ENCODE measurements at regions of chr4 and their contacts with region 1.

Region 1: DNA sequence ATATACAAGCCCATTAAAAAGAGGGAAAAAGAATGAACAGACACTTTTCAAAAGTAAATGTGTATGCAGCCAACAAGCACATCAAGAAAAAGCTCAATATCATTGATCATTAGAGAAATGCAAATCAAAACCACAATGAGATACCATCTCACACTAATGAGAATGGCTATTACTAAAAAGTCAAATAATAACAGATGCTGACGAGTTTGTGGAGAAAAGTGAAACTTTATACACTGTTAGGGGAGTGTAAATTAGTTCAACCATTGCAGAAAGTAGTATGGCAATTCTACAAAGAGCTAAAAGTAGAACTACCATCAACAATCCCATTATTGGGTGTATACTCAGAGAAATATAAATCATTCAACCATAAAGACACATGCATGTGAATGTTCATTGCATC is 203.0 kb downstream of the ARAP2 start:
- DNase-seq: no peak
- ATAC-seq: no peak
- H3K4me3 ChIP-seq: no peak overlapping the region
- H3K27ac ChIP-seq: no peak overlapping the region
- H3K4me1 ChIP-seq: no peaks in the 10 kb centered on the region
- H3K27me3 ChIP-seq: no peaks in the 10 kb centered on the region
- CTCF ChIP-seq: no peak

Region 2: GRCh38 chr4:35824231-35824630 is 217.1 kb before region 1 on chr4:
- CTCF ChIA-PET with region 1: no interaction called
- POLR2A ChIA-PET with region 1: no interaction called
- intact Hi-C with region 1: no loop called
- DNase-seq: no peak
- ATAC-seq: no peak
- H3K4me3 ChIP-seq: no peak overlapping the region
- H3K27ac ChIP-seq: no peak overlapping the region
- H3K4me1 ChIP-seq: no peaks in the 10 kb centered on the region
- H3K27me3 ChIP-seq: no peaks in the 10 kb centered on the region
- CTCF ChIP-seq: no peak

Region 3: DNA sequence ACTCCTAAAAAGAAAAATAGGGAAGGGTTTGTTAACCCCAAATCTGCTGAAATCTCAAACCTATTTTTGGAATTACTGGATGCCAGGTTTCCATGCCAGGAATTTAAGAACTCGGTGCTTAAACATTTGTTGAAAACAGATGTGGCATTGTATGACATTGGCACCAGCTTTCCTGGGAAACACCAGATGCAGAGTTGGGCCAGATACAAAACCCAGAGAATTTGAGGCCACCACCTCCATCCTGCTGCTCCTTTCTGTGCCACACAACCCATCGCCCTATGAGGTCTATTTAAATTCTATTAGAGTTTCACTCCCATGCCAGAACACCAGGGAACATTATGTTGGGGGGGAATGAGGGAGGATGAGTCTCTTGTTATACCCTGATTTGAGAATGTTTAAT is 131.3 kb after region 1 on chr4:
- CTCF ChIA-PET with region 1: no interaction called
- POLR2A ChIA-PET with region 1: no interaction called
- intact Hi-C with region 1: loop called (anchors 10 kb)
- DNase-seq: no peak
- ATAC-seq: no peak
- H3K4me3 ChIP-seq: no peak overlapping the region
- H3K27ac ChIP-seq: no peak overlapping the region
- H3K4me1 ChIP-seq: peaks cover 7% of the 10 kb centered on the region
- H3K27me3 ChIP-seq: no peaks in the 10 kb centered on the region
- CTCF ChIP-seq: no peak

Measured in PC-3 (cell line).